ENCODE measurements at regions of chr2 and their contacts with region 1.

Region 1: GRCh38 chr2:178891265-178891958 is 84.2 kb upstream of the TTN start:
- DNase-seq: peak; percentile 63
- ATAC-seq: peak; percentile 87
- H3K4me3 ChIP-seq: no peak overlapping the region
- H3K27ac ChIP-seq: no peak overlapping the region
- H3K4me1 ChIP-seq: no peaks in the 10 kb centered on the region
- H3K27me3 ChIP-seq: peaks cover 4% of the 10 kb centered on the region; the same call in 1 of the 2 replicates
- CTCF ChIP-seq: peak; percentile 78
- POLR2A ChIP-seq: no peak
- RAD21 ChIP-seq: peak; percentile 41

Region 2: DNA sequence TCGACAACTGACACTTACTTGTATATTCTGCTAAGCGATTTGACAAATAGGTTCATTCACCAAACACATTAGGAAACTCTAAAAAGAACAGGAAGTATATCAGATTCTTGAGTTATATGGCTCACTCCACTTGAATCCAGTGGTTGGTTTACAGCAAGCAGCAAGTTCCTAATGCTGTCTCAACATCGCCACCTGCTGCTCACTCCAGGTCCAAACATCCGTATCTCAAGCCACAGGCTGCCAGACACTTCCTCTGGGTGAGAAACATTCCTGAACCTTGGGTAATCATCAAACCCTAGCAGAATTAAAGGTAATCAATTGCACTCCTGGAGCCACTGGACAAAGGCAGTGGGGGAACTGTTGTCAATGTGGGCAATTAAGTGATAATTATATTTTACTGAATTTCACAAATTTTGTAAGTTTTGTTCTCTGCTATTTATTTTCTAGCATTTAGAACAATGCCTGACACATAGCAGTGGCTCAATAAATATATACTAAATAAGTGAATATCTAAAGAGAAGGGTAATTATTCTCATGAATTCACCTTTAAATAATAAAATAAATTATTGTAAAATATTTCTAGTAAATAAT is 22.9 kb after region 1 on chr2:
- CTCF ChIA-PET with region 1: interaction called, 5 read pairs
- POLR2A ChIA-PET with region 1: no interaction called
- dilution Hi-C with region 1: no loop called
- in situ Hi-C with region 1: no loop called
- intact Hi-C with region 1: loop called (anchors 1 kb)
- DNase-seq: peak; percentile 79
- ATAC-seq: peak; percentile 96
- H3K4me3 ChIP-seq: no peak overlapping the region
- H3K27ac ChIP-seq: no peak overlapping the region
- H3K4me1 ChIP-seq: no peaks in the 10 kb centered on the region
- H3K27me3 ChIP-seq: peaks cover 2% of the 10 kb centered on the region
- CTCF ChIP-seq: peak; percentile 75
- POLR2A ChIP-seq: no peak
- RAD21 ChIP-seq: peak; percentile 65

Region 3: GRCh38 chr2:178933493-178933892 is 42.1 kb after region 1 on chr2:
- CTCF ChIA-PET with region 1: no interaction called
- POLR2A ChIA-PET with region 1: no interaction called
- dilution Hi-C with region 1: no loop called
- in situ Hi-C with region 1: no loop called
- intact Hi-C with region 1: no loop called
- DNase-seq: no peak
- ATAC-seq: no peak
- H3K4me3 ChIP-seq: no peak overlapping the region
- H3K27ac ChIP-seq: no peak overlapping the region
- H3K4me1 ChIP-seq: no peaks in the 10 kb centered on the region
- H3K27me3 ChIP-seq: no peaks in the 10 kb centered on the region
- CTCF ChIP-seq: no peak
- POLR2A ChIP-seq: no peak
- RAD21 ChIP-seq: no peak

Region 4: GRCh38 chr2:179129574-179130238 is 238.3 kb after region 1 on chr2:
- CTCF ChIA-PET with region 1: no interaction called
- POLR2A ChIA-PET with region 1: no interaction called
- dilution Hi-C with region 1: no loop called
- in situ Hi-C with region 1: no loop called
- intact Hi-C with region 1: loop called (anchors 1 kb)
- DNase-seq: peak; percentile 10
- ATAC-seq: peak; percentile 63
- H3K4me3 ChIP-seq: no peak overlapping the region
- H3K27ac ChIP-seq: no peak overlapping the region
- H3K4me1 ChIP-seq: peaks cover 2% of the 10 kb centered on the region; the same call in 1 of the 2 replicates
- H3K27me3 ChIP-seq: no peaks in the 10 kb centered on the region
- CTCF ChIP-seq: peak; percentile 52
- POLR2A ChIP-seq: no peak
- RAD21 ChIP-seq: peak; percentile 42